ENCODE measurements at regions of chr1 and their contacts with region 1.

Region 1: GRCh38 chr1:44739361-44740178 is at the start of gene KIF2C:
- DNase-seq: peak; percentile 95
- H3K4me3 Mint-ChIP-seq: peak within 1 kb of the TSS; percentile 92
- H3K27ac Mint-ChIP-seq: peak within 1 kb of the TSS; percentile 90
- H3K4me1 Mint-ChIP-seq: peaks cover 37% of the 10 kb centered on the region
- H3K27me3 Mint-ChIP-seq: no peaks in the 10 kb centered on the region
- total RNA-seq, gene KIF2C: 68.7 and 72.9 TPM in 2 replicates

Region 2: DNA sequence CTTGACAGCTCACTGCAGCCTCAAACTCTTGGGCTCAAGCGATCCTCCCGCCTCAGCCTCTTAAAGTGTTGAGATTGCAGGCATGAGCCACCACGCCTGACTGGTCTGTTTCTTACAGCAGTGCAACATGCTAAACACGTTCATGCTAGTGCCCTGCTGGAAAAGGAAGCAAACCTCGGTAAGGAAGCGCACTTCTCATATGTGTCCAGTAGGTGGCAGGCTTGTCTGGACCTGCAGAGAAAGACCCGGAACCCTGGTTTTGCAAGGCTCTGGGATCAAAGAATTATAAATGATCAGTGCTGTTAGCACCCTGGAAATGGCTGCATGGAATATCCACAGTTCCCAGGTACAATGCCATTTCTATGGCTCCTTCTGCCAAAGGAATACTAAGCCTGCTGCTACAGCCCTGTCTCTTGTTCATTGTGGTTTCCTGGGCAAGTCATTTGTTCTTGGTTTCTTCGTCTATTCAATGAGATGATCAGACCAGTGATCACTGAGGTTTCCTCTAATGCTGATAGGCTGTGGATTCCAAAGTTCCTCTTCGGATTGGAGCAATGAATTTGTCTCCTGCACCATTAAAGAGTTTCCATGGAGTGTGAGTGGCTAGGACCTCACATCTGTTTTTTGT is 24.5 kb before region 1 on chr1:
- intact Hi-C with region 1: loop called (anchors 2 kb)
- DNase-seq: peak; percentile 63
- H3K4me3 Mint-ChIP-seq: peak overlapping the region; percentile 52
- H3K27ac Mint-ChIP-seq: peak overlapping the region; percentile 35
- H3K4me1 Mint-ChIP-seq: peaks cover 44% of the 10 kb centered on the region
- H3K27me3 Mint-ChIP-seq: peaks cover 8% of the 10 kb centered on the region

Region 3: GRCh38 chr1:44721485-44722361 is 17.8 kb before region 1 on chr1:
- intact Hi-C with region 1: loop called (anchors 1 kb)
- DNase-seq: peak; percentile 75
- H3K4me3 Mint-ChIP-seq: peak overlapping the region; percentile 77
- H3K27ac Mint-ChIP-seq: peak overlapping the region; percentile 97
- H3K4me1 Mint-ChIP-seq: peaks cover 71% of the 10 kb centered on the region
- H3K27me3 Mint-ChIP-seq: no peaks in the 10 kb centered on the region

Region 4: DNA sequence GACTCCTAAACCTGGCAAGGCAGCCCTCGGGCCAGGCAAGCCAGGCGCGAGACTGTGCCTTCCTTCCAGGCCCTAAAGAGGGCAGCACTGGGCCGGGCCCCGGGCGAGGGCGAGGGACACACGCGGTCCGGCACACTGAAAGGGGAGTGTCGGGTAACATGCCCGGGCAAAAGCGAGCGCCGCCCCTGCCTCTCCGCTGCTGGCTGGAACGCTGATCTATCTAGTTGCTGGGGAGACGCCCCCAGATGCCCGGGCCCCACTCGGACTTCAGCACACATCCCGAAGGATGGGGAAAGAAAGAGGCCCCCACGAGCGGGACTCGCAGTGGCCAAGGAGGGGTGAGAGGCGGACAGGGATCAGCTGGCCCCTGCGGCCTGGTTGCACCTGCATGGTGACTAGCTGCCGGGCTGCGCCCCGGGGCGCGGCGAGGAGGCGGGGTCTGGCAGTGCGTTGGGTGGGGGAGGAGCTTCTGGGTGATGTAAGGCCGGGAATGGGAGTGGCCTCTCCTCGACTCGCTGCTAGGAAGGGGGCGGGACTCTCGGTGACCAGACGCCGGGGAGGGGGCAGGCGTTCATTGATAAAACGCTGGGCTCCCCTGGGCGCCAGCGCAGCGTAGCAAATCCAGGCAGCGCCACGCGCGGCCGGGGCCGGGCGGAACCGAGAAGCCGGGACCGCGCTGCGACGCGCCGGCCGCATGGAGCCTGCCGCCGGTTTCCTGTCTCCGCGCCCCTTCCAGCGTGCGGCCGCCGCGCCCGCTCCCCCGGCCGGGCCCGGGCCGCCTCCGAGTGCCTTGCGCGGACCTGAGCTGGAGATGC is 60.4 kb after region 1 on chr1 and contains the start of gene PLK3:
- intact Hi-C with region 1: loop called (anchors 2 kb)
- DNase-seq: peak; percentile 97
- H3K4me3 Mint-ChIP-seq: peak within 1 kb of the TSS; percentile 97
- H3K27ac Mint-ChIP-seq: peak within 1 kb of the TSS; percentile 99
- H3K4me1 Mint-ChIP-seq: peaks cover 35% of the 10 kb centered on the region
- H3K27me3 Mint-ChIP-seq: no peaks in the 10 kb centered on the region
- total RNA-seq, gene PLK3: 208 and 211 TPM in 2 replicates

Measured in activated T-helper 1 cell treated with anti-CD3 and anti-CD28 coated beads, Interleukin-12 subunit alpha, Interleukin-12 subunit beta, Interleukin-2, Interleukin-4 antibody, amounts not matched to agents 30 ng/mL and 10 ng/mL and 1 ng/mL, durations not matched to agents 14 hours and 24 hours and 36 hours (primary cell).